ENCODE measurements at regions of chr6 and their contacts with region 1.

Region 1: DNA sequence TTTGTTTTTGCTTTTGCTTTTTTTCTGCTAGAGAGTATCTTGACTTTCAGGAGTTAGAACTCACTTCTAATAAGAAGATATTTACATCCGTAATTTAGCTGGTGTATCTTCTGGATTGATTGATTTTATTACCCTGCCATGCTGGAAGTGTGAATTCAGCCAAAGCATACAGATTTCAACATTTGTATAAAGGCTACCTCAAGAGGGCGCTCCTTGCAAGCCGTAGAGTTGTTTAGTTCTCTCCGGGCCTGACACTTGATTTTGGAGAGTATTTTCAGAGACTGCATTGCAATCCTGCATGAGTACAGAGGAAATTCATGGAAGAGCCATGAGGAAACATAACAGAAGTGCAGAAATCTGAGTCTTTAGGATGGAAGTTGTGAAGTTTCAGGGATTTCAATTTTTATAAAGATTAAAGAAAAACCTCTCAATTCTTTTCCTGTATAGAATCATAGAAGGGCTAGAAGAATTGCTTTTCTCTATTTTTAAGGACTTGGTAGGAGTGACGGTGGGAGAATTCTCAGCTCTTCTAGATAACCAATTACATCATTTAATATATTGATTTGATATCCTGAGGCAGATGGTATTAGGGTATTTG is 66.7 kb upstream of the TIAM2 start:
- DNase-seq: peak; percentile 61 to 82 (median 75)
- H3K4me3 ChIP-seq: no peak overlapping the region
- H3K27ac ChIP-seq: no peak overlapping the region
- H3K4me1 ChIP-seq: peaks cover 2 to 14% (median 8%) of the 10 kb centered on the region in 4 experiments
- H3K27me3 ChIP-seq: no peaks in the 10 kb centered on the region

Region 2: DNA sequence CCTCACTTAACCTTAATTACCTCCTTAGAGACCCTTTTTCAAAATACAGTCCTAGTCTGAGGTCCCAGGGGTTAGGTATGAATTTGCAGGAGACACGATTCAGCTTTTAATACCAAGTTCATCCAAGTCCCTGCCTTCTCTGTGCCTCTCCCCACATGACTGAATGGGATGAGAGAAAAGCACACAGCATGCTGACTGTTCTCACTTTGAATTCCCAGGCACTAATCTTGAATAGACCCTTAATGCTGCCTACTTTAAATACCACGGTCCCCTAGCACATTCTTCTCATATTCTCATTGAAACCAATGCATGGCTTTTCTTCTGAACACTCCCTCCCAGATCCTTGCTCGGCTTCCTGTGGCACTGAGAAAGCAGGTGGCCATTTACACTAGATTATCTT is 225.3 kb before region 1 on chr6:
- CTCF ChIA-PET with region 1: no interaction called
- POLR2A ChIA-PET with region 1: no interaction called
- DNase-seq: no peak
- H3K4me3 ChIP-seq: no peak overlapping the region
- H3K27ac ChIP-seq: no peak overlapping the region
- H3K4me1 ChIP-seq: no peaks in the 10 kb centered on the region
- H3K27me3 ChIP-seq: no peaks in the 10 kb centered on the region

Region 3: GRCh38 chr6:154916857-154917256 is 11.6 kb before region 1 on chr6:
- CTCF ChIA-PET with region 1: interaction called, 14 read pairs
- POLR2A ChIA-PET with region 1: no interaction called
- DNase-seq: no peak
- H3K4me3 ChIP-seq: no peak overlapping the region
- H3K27ac ChIP-seq: no peak overlapping the region
- H3K4me1 ChIP-seq: peaks cover 0 to 6% (median 4%) of the 10 kb centered on the region in 4 experiments
- H3K27me3 ChIP-seq: no peaks in the 10 kb centered on the region

Region 4: GRCh38 chr6:155174576-155175211 is 246.3 kb after region 1 on chr6:
- CTCF ChIA-PET with region 1: interaction called, 77 read pairs
- POLR2A ChIA-PET with region 1: no interaction called
- DNase-seq: peak; percentile 86 to 93 (median 92)
- H3K4me3 ChIP-seq: no peak overlapping the region
- H3K27ac ChIP-seq: no peak overlapping the region
- H3K4me1 ChIP-seq: peaks cover 0 to 13% (median under 1%) of the 10 kb centered on the region in 4 experiments
- H3K27me3 ChIP-seq: no peaks in the 10 kb centered on the region

Region 5: DNA sequence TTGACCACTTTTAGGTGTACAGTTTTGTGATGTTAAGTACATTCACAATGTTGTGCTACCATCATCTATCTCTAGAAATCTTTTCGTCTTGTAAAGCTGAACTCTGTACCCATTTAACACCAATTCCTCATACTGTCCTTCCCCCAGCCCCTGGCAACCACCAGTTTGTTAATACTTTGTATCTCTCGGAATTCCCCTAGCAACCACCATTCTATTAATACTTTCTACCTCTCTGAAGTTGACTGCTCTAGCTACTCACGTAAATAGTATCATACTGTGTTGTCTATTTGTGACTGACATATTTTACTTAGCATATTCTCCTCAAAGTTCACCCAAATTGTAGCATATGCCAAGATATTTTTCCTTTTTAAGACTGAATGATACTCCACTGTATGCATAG is 253.1 kb after region 1 on chr6:
- CTCF ChIA-PET with region 1: interaction called, 77 read pairs
- POLR2A ChIA-PET with region 1: no interaction called
- DNase-seq: no peak
- H3K4me3 ChIP-seq: no peak overlapping the region
- H3K27ac ChIP-seq: no peak overlapping the region
- H3K4me1 ChIP-seq: peaks cover 0 to 7% (median 4%) of the 10 kb centered on the region in 4 experiments
- H3K27me3 ChIP-seq: no peaks in the 10 kb centered on the region

Measured in common myeloid progenitor, CD34-positive (primary cell).